ENCODE measurements at regions of chr3 and their contacts with region 1.

Region 1: DNA sequence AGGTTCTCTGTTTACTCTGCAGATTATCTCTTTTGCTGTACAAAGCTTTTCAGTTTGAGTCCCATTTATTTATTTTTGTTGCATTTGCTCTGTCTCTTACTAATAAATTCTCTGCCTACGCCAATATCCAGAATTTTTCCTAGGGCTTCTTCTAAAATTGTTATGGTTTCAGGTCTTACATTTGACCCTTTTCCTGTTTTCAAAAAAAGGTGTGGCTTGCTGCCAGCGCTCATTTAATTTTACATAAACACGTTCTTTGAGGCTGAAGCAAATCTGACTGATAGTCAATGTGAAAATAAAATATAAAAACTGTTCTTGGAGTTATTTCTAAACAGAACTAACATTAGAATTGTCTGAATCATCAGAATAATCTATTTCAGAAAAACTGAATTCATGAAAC is 32.1 kb downstream of the DCBLD2 start:
- DNase-seq: no peak
- ATAC-seq: no peak
- H3K4me3 ChIP-seq: no peak overlapping the region
- H3K4me3 Mint-ChIP-seq: no peak overlapping the region
- H3K27ac ChIP-seq: no peak overlapping the region
- H3K27ac Mint-ChIP-seq: no peak overlapping the region
- H3K4me1 ChIP-seq: no peaks in the 10 kb centered on the region
- H3K4me1 Mint-ChIP-seq: no peaks in the 10 kb centered on the region
- H3K27me3 ChIP-seq: no peaks in the 10 kb centered on the region
- H3K27me3 Mint-ChIP-seq: no peaks in the 10 kb centered on the region
- CTCF ChIP-seq: no peak

Region 2: GRCh38 chr3:98809557-98809956 is 59.8 kb before region 1 on chr3:
- CTCF ChIA-PET with region 1: no interaction called
- POLR2A ChIA-PET with region 1: no interaction called
- intact Hi-C with region 1: no loop called
- DNase-seq: peak in 2 of 14 experiments; percentile 10 to 15
- ATAC-seq: no peak
- H3K4me3 ChIP-seq: no peak overlapping the region
- H3K4me3 Mint-ChIP-seq: no peak overlapping the region
- H3K27ac ChIP-seq: no peak overlapping the region
- H3K27ac Mint-ChIP-seq: no peak overlapping the region
- H3K4me1 ChIP-seq: no peaks in the 10 kb centered on the region
- H3K4me1 Mint-ChIP-seq: no peaks in the 10 kb centered on the region
- H3K27me3 ChIP-seq: no peaks in the 10 kb centered on the region
- H3K27me3 Mint-ChIP-seq: no peaks in the 10 kb centered on the region
- CTCF ChIP-seq: no peak

Region 3: GRCh38 chr3:98901392-98902350 is 32.3 kb after region 1 on chr3 and contains the start of gene DCBLD2:
- CTCF ChIA-PET with region 1: no interaction called
- POLR2A ChIA-PET with region 1: no interaction called
- intact Hi-C with region 1: no loop called
- DNase-seq: peak; percentile 79 to 96 (median 88)
- ATAC-seq: peak; percentile 98
- H3K4me3 ChIP-seq: peak within 1 kb of the TSS; percentile 67
- H3K4me3 Mint-ChIP-seq: peak within 1 kb of the TSS; percentile 93
- H3K27ac ChIP-seq: peak within 1 kb of the TSS in 1 of 2 donors; percentile 45
- H3K27ac Mint-ChIP-seq: peak within 1 kb of the TSS; percentile 76
- H3K4me1 ChIP-seq: peaks cover 13% of the 10 kb centered on the region
- H3K4me1 Mint-ChIP-seq: peaks cover 26% of the 10 kb centered on the region
- H3K27me3 ChIP-seq: peaks cover 0 to 2% of the 10 kb centered on the region in 2 experiments
- H3K27me3 Mint-ChIP-seq: peaks cover 12% of the 10 kb centered on the region
- CTCF ChIP-seq: no peak
- total RNA-seq, gene DCBLD2: 2.2 to 2.5 TPM

Region 4: DNA sequence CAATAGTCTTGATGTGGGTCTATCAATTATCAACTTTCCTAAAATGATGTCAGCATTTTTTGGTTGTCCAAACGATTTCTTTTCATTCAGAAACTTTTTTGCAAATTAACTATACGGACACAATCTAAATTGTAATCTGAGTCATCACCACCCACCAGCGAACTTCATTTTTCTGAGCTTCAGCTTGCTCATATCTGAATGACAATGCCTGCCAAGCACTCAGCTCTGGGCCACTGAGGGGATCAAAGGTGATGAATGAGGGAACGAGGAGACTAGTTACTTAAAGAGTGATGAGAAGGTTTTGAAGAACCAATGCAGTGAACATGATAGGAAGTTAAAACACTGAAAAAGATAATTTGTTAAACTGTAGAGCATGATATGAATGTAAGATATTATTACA is 1376.5 kb after region 1 on chr3:
- CTCF ChIA-PET with region 1: no interaction called
- POLR2A ChIA-PET with region 1: no interaction called
- intact Hi-C with region 1: loop called in 1 of 2 experiments (anchors 5 kb)
- DNase-seq: no peak
- ATAC-seq: no peak
- H3K4me3 ChIP-seq: no peak overlapping the region
- H3K4me3 Mint-ChIP-seq: no peak overlapping the region
- H3K27ac ChIP-seq: no peak overlapping the region
- H3K27ac Mint-ChIP-seq: no peak overlapping the region
- H3K4me1 ChIP-seq: no peaks in the 10 kb centered on the region
- H3K4me1 Mint-ChIP-seq: no peaks in the 10 kb centered on the region
- H3K27me3 ChIP-seq: no peaks in the 10 kb centered on the region
- H3K27me3 Mint-ChIP-seq: peaks cover 4% of the 10 kb centered on the region
- CTCF ChIP-seq: no peak